RWPE1 (cell line): ENCODE measurements at regions of chr14 and their contacts with region 1.

Region 1: GRCh38 chr14:93804646-93805045 is 16.4 kb upstream of the PRIMA1 start:
- DNase-seq: no peak
- H3K27ac ChIP-seq: no peak overlapping the region
- CTCF ChIP-seq: no peak

Region 2: DNA sequence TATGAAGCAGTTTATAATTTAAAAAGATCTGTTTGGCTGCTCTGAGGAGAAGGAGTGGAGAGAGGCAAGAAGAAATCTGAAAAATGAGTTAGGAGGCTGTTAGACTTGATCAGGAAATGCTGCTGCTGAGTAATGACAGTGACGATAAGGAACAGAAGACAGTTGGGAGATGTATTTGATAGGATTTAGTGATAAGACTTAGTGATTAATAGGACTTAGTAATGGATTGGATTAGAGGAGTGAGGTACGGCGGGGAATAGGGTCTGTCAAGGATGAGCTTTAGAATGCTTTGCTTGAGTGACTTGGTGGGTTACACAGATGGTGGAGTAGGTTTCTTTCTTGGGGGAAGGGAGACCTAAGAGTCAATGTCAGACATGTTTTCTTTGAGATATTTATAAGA is 342.2 kb before region 1 on chr14:
- CTCF ChIA-PET with region 1: interaction called, 10 read pairs
- POLR2A ChIA-PET with region 1: no interaction called
- DNase-seq: no peak
- H3K27ac ChIP-seq: no peak overlapping the region
- CTCF ChIP-seq: no peak

Region 3: DNA sequence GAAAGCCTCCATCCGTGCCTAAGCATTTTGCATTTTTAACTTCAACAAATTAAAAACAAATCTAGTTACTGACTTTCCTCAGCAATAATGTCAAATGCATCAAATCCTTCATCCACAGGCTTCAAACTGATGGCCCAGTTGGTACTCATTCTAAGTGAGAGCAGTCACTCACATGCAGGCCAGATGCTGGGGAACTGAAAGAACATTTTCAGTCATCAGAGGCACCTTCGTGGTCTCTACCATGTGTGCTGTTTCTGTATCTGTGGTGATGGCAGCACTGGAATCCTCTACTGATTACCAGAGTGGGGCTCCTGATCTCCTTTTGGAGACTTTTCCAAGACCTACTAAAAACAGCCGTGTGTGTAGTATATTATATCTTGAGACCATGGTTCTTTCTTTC is 161.5 kb before region 1 on chr14:
- CTCF ChIA-PET with region 1: no interaction called
- POLR2A ChIA-PET with region 1: no interaction called
- DNase-seq: no peak
- H3K27ac ChIP-seq: no peak overlapping the region
- CTCF ChIP-seq: no peak

Region 4: GRCh38 chr14:93859957-93860356 is 55.3 kb after region 1 on chr14:
- CTCF ChIA-PET with region 1: no interaction called
- POLR2A ChIA-PET with region 1: no interaction called
- DNase-seq: no peak
- H3K27ac ChIP-seq: no peak overlapping the region
- CTCF ChIP-seq: no peak

Region 5: DNA sequence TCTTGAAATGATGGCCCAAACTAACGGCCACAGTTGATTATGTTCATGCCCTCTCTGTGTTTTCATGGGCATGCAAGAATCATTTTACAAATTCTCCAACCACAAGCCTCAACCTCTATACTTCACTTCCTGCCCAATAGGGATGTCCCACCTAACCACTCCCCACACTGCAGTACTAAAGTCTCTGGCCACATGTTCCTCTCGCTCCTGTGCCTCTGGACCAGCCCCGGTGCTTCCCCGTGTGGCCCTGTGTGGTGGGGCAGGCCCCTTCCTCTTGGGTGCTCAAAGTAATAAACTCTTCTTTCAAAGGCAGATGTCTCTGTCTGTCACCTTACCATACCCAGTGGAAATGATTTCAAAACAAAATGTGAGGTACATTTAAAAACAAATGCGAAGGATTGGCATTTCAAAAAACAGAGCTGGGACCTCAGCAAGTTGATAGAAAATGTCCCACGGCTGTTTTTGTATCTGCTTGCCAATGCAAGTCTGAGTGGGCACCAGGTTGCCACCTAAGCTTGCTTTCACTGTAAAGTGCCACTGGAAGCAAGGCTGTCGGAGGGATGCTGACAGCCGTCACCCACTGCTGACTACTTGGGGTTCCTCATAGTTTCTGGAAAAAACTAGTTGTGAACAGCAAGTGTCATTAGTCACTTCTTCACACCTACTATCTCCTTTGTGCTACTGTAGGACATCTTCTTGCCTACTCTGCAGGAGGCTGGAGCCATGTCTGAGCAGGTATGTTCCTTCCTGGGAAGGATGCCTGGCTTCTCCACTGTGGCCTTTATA is 656.2 kb after region 1 on chr14:
- CTCF ChIA-PET with region 1: no interaction called
- POLR2A ChIA-PET with region 1: no interaction called
- DNase-seq: no peak
- H3K27ac ChIP-seq: no peak overlapping the region
- CTCF ChIP-seq: no peak